Posterior vena cava (tissue), 2 donors: ENCODE measurements at regions of chr5 and their contacts with region 1.

Region 1: DNA sequence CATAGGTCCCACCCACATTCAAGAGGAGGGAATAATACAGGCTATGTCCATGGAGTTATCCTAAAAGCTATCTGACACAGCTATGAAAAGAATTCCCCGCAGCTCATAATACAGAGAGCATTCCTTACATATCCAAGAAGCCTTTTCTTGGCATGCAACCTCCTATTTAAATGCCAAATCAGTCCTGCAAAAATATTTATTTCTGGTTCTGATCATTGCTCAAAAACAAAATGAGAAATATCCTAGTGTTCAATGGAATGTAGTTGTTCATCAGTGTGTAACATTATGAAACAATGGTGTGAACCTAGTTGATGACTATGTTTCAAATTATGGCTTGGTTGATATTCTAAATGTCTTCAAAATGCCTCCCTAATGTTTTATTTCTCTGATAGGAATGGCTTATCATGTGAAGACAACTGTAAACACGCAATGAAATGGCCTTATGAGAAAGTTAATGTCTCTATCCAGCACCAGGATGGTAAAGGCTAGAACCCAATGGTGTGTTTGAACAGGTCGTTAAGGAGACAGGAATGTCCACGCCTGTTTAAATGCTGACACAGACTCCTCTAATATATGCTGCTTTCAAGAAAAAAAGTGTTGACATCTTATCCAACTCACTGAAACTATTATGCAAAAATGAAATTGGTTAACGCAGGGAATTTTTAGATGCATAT is 126.7 kb upstream of the CDH6 start:
- DNase-seq: no peak

Region 2: DNA sequence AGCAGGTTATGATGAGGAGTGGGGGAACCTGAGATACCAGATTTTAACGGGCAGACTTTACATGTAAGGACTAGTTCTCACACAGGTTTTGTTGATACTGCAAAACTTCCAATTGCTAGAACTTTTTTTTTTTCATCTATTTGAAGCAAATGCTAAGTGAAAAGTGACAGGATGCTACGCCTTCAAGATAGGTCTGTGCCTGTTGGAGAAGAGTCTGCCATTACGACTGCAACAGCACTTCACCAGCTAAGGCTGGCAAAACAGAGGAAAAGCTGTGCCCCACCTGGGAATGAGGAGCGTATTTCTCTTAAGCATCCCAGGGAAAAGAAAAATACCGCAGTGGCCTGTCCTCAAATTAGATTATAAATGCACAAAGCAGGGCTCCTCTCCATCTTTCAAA is 24.7 kb after region 1 on chr5:
- intact Hi-C with region 1: loop called in 1 of 2 experiments (anchors 1 kb)
- DNase-seq: no peak

Region 3: GRCh38 chr5:31382051-31382878 is 315.5 kb after region 1 on chr5:
- intact Hi-C with region 1: no loop called
- DNase-seq: no peak